PC-3 (cell line): ENCODE measurements at regions of chr13 and their contacts with region 1.

Region 1: GRCh38 chr13:98570929-98571372 is 6.0 kb downstream of the STK24 start:
- DNase-seq: peak; percentile 89
- ATAC-seq: peak; percentile 75
- H3K4me3 ChIP-seq: peak overlapping the region; percentile 54
- H3K27ac ChIP-seq: peak overlapping the region; percentile 81
- H3K4me1 ChIP-seq: peaks cover 50% of the 10 kb centered on the region
- H3K27me3 ChIP-seq: no peaks in the 10 kb centered on the region
- CTCF ChIP-seq: no peak

Region 2: GRCh38 chr13:98509271-98510155 is 61.4 kb before region 1 on chr13:
- CTCF ChIA-PET with region 1: no interaction called
- POLR2A ChIA-PET with region 1: no interaction called
- intact Hi-C with region 1: loop called (anchors 1 kb)
- DNase-seq: peak; percentile 74
- ATAC-seq: peak; percentile 92
- H3K4me3 ChIP-seq: 0 out of 2 replicates have a peak overlapping the region, but pooled peaks have one; percentile 22
- H3K27ac ChIP-seq: peak overlapping the region; percentile 91
- H3K4me1 ChIP-seq: peaks cover 48% of the 10 kb centered on the region
- H3K27me3 ChIP-seq: no peaks in the 10 kb centered on the region
- CTCF ChIP-seq: no peak

Region 3: DNA sequence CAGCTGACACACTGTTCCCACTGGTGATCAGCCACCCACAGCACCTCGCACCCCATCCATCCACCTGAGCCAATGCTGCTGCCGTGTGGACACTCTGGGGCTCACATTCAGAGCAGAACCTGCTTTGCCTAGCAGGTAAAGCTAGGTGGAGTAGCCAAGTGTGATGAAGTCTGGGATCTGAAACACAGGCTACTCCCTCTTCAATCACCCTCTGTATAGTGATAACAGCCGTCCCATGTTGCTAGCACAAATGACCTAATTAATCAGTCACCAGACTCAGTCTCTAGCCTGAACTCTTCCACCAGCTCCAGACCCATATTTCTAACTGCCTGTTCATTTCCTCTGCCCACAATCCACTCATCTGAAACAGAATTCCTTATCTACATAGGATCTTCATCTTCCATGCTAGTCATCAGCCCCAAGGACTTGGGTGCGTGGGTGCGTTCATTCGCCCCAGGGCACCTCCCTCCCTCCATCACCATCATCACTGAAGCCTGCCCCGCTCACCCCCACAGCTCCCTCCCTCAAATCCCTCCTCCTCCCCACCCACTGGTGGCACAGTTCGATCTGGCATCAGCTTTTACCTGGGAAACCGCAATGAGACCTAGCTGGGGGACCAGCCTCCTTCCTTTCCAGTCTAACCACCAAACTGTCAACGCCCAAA is 13.9 kb before region 1 on chr13:
- CTCF ChIA-PET with region 1: interaction called, 20 read pairs
- POLR2A ChIA-PET with region 1: no interaction called
- intact Hi-C with region 1: no loop called
- DNase-seq: no peak
- ATAC-seq: peak; percentile 37
- H3K4me3 ChIP-seq: no peak overlapping the region
- H3K27ac ChIP-seq: no peak overlapping the region
- H3K4me1 ChIP-seq: peaks cover 5% of the 10 kb centered on the region; the same call in 1 of the 2 replicates
- H3K27me3 ChIP-seq: no peaks in the 10 kb centered on the region
- CTCF ChIP-seq: 0 out of 2 replicates have a peak, but pooled peaks have one; percentile 15